Endothelial cell of umbilical vein (primary cell): ENCODE measurements at regions of chr4 and their contacts with region 1.

Region 1: DNA sequence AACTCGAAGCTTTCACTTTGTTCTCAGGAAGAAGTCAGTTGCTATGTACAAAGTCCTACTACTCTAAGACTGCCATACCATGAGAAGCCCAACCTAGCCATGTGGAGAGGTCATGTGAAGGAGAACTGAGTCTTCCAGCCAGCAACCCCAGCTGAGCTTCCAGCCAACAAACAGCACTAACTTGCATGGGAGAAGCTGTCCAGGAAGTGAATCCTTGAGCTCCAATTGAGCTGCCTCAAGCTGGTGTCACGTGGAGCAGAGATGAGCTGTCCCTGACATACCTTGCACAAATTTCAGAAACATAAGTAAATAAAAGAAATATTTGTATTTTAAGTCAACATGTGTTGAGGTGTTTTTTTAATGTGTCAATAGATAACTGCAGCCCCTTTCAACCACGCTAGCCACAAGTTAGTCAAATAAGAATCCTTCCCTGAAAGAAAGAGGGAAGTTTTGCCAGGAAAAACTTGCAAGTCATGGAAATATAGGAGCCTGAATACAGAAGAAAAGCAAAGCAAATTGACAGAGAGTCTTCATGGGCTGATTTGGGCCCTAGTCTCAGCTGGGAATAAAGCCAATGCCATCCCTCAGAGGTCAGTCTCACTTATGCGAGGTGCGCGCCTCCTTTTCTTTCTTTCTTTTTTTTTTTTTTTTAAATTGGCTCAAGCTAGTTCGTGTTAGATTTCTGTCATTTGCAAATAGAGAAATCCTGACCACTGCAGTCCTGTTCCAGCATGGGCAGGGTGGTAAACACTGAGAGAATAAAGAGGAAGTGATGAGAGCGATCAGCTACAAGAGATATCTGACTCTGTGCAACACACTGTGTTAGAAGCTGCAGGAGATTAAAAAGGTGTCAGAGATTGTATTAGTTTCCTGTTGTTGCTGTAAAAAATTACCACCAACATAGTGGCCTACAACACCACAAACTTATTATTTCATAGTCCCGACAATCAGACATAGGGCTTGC is 299.9 kb downstream of the LDB2 start:
- DNase-seq: peak; percentile 46
- H3K4me3 ChIP-seq: no peak overlapping the region
- H3K27ac ChIP-seq: peak overlapping the region; percentile 55
- H3K4me1 ChIP-seq: peaks cover 15% of the 10 kb centered on the region
- H3K27me3 ChIP-seq: no peaks in the 10 kb centered on the region
- CTCF ChIP-seq: no peak
- POLR2A ChIP-seq: no peak

Region 2: GRCh38 chr4:16669036-16669435 is 70.5 kb after region 1 on chr4:
- CTCF ChIA-PET with region 1: no interaction called
- POLR2A ChIA-PET with region 1: no interaction called
- dilution Hi-C with region 1: no loop called
- intact Hi-C with region 1: loop called (anchors 2 kb)
- DNase-seq: no peak
- H3K4me3 ChIP-seq: no peak overlapping the region
- H3K27ac ChIP-seq: no peak overlapping the region
- H3K4me1 ChIP-seq: no peaks in the 10 kb centered on the region
- H3K27me3 ChIP-seq: peaks cover 0 to 2% of the 10 kb centered on the region in 2 experiments
- CTCF ChIP-seq: no peak
- POLR2A ChIP-seq: no peak